Activated CD8-positive, alpha-beta memory T cell treated with anti-CD3 and anti-CD28 coated beads, Interleukin-2, amount 10 ng/mL, durations not matched to agents 7 days and 5 days (primary cell): ENCODE measurements at regions of chr17 and their contacts with region 1.

Region 1: GRCh38 chr17:63904316-63904715 is 6.7 kb downstream of the CSHL1 start:
- DNase-seq: no peak
- ATAC-seq: no peak
- H3K4me3 Mint-ChIP-seq: no peak overlapping the region
- H3K27ac Mint-ChIP-seq: no peak overlapping the region
- H3K4me1 Mint-ChIP-seq: peaks cover 5% of the 10 kb centered on the region
- H3K27me3 Mint-ChIP-seq: peaks cover 43% of the 10 kb centered on the region

Region 2: DNA sequence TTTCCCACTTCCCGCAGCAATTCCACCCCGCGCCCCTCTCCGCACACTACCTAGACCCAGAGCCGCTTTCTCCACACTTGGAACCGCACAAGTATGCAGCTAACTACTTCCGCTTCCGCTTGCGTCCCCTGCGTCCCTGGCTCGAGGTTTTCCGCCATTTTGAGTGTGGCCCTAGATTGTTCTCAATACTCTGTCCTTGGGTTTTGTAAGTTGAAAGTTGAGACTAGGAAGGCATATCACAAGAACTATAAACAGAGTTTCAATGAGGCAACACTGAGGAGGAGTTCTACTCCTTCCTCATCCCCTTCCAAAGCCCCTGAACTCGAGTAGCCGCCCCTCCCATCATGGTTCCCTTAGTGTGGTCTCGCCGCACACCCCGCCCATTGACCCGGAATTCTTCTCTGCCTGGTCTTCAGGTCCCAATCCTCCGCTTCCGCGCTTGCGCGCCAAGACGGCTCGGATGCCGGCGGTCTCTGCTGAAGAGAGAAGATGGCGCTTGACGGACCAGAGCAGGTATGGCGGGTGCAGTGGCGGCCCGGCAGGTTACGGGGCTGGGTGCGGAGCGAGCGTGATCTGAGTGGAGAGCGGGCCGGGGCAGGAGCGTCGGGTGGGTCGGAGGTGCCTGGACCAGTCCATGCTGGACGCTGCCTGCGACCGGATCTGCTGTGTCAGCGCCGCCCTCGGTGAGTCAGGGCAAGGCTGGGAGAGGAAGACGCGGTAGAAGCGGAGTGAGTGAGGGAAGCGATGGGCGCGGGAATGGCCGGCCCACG is 77.1 kb before region 1 on chr17 and contains the starts of genes FTSJ3 and PSMC5:
- CTCF ChIA-PET with region 1: no interaction called
- DNase-seq: peak; percentile 97
- ATAC-seq: peak; percentile 91
- H3K4me3 Mint-ChIP-seq: peak within 1 kb of the TSS; percentile 99
- H3K27ac Mint-ChIP-seq: peak within 1 kb of the TSS; percentile 97
- H3K4me1 Mint-ChIP-seq: peaks cover 79% of the 10 kb centered on the region
- H3K27me3 Mint-ChIP-seq: no peaks in the 10 kb centered on the region
- total RNA-seq, gene FTSJ3: 58.9 to 71.7 TPM
- total RNA-seq, gene PSMC5: 157 to 195 TPM

Region 3: DNA sequence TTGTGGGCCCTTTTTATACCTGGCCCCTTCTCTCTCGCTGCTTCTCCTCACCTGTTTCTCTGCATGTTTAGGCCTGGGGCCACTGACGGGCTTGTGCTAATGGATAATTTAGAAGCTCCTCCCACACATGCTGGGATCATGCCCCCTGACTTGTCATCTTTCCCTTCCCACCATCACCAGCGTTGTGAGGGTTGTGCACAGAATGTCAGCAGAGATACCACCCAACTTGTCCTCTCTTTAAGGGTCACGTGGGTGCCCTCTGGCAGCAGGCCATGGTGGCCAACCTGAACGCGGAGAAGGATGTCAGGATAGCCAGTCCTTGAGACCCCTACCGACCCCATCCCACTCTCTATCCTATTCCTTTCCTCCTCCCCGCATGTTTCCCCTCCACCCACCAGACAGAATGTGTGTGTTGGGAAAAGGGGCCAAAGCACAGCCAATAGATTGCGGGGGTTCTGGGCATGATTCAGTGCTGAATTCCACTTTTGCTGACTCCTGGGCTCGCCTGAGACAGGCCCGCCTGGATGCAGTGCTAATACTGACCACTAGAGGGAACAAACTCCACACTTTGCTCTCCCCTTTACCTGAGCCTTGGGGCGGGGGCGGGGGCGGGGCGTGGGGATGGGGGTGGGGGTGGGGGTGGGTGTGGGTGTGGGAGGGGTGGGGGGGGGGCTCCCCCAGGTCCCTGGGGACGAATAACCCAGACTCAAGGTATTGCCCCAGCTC is 22.3 kb before region 1 on chr17 and contains the start of gene GH2:
- CTCF ChIA-PET with region 1: interaction called, 16 read pairs
- DNase-seq: peak; percentile 72
- ATAC-seq: peak; percentile 89
- H3K4me3 Mint-ChIP-seq: no peak within 1 kb of the TSS
- H3K27ac Mint-ChIP-seq: no peak within 1 kb of the TSS
- H3K4me1 Mint-ChIP-seq: peaks cover 7% of the 10 kb centered on the region
- H3K27me3 Mint-ChIP-seq: peaks cover 10% of the 10 kb centered on the region
- total RNA-seq, gene GH2: not detected

Region 4: DNA sequence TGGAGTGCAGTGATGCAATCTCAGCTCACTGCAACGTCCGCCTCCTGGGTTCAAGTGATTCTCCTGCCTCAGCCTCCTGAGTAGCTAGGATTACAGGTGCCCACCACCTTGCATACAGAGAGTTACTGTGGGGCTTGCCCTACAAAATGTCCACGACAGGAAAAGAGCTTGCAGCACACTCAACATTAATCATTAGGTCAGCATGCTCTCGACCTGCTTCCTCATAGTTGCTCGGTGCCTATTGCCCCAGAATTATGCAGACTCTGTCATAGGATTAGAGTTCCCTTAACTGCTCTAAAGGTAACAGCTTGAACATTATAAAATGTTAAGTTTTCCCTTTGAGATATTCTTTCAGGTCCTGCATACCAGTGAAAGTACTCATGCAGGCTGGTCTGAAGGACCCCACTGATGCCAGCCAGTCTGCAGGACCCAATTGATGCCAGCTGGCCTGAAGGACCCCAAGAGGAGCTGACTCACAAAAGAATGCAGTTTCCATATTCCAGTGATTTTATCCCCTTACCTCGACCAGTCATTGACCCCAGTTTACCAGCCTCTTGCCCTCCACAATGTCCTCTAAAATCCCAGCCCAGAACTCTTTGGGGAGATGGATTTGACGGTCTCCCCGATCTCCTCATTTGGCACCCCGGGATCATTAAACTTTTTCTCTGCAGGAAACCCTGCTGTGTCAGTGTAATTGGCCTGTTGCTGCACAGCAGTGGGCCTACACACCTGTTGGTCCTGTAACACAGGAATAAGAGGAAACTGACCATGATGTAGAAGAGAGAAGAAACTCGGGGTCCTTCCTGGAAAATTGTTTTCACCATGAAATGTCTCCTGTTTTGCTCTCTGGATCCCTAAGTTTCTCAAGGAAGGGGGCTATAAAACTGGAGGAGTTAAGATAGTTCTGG is 105.4 kb after region 1 on chr17:
- CTCF ChIA-PET with region 1: no interaction called
- DNase-seq: no peak
- ATAC-seq: no peak
- H3K4me3 Mint-ChIP-seq: no peak overlapping the region
- H3K27ac Mint-ChIP-seq: peak overlapping the region; percentile 5
- H3K4me1 Mint-ChIP-seq: peaks cover 35% of the 10 kb centered on the region
- H3K27me3 Mint-ChIP-seq: no peaks in the 10 kb centered on the region